ENCODE measurements at regions of chr12 and their contacts with region 1.

Region 1: GRCh38 chr12:6570264-6570887 is 2.3 kb upstream of the NOP2 start:
- DNase-seq: peak; percentile 73
- ATAC-seq: peak; percentile 29
- H3K4me3 Mint-ChIP-seq: no peak overlapping the region
- H3K27ac Mint-ChIP-seq: peak overlapping the region; percentile 10
- H3K4me1 Mint-ChIP-seq: peaks cover 44% of the 10 kb centered on the region
- H3K27me3 Mint-ChIP-seq: no peaks in the 10 kb centered on the region
- CTCF ChIP-seq: peak; percentile 76

Region 2: GRCh38 chr12:6508087-6508486 is 62.3 kb before region 1 on chr12:
- CTCF ChIA-PET with region 1: no interaction called
- POLR2A ChIA-PET with region 1: no interaction called
- intact Hi-C with region 1: no loop called
- DNase-seq: no peak
- ATAC-seq: no peak
- H3K4me3 Mint-ChIP-seq: no peak overlapping the region
- H3K27ac Mint-ChIP-seq: no peak overlapping the region
- H3K4me1 Mint-ChIP-seq: peaks cover 11% of the 10 kb centered on the region
- H3K27me3 Mint-ChIP-seq: no peaks in the 10 kb centered on the region
- CTCF ChIP-seq: no peak

Region 3: GRCh38 chr12:6554168-6555017 is 16.0 kb before region 1 on chr12:
- CTCF ChIA-PET with region 1: interaction called, 12 read pairs
- POLR2A ChIA-PET with region 1: interaction called, 38 read pairs
- intact Hi-C with region 1: no loop called
- DNase-seq: peak; percentile 89
- ATAC-seq: peak; percentile 76
- H3K4me3 Mint-ChIP-seq: peak overlapping the region; percentile 89
- H3K27ac Mint-ChIP-seq: peak overlapping the region; percentile 51
- H3K4me1 Mint-ChIP-seq: peaks cover 50% of the 10 kb centered on the region
- H3K27me3 Mint-ChIP-seq: no peaks in the 10 kb centered on the region
- CTCF ChIP-seq: peak; percentile 62

Region 4: DNA sequence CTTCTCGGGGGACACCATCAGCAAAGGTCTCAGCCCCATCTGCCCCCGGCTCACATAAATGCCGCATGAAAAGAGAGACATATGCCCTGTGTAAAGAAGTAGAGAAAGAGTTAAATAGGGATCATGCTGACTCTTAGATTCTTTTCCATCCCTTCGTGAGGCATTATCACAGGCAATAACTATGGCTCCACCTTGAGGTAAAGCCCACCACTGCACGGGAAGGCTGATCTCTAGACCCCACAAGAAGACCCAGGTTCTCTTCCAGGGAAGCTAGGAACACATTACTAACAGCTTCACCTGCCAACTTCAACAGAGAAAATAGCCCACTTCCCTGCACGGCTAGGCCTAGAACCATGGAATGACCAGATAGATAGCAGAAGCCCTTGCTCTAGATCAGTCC is 11.8 kb after region 1 on chr12:
- CTCF ChIA-PET with region 1: interaction called, 15 read pairs
- POLR2A ChIA-PET with region 1: interaction called, 6 read pairs
- intact Hi-C with region 1: no loop called
- DNase-seq: no peak
- ATAC-seq: no peak
- H3K4me3 Mint-ChIP-seq: no peak overlapping the region
- H3K27ac Mint-ChIP-seq: peak overlapping the region; percentile 23
- H3K4me1 Mint-ChIP-seq: peaks cover 4% of the 10 kb centered on the region
- H3K27me3 Mint-ChIP-seq: no peaks in the 10 kb centered on the region
- CTCF ChIP-seq: no peak

Measured in activated CD8-positive, alpha-beta T cell treated with anti-CD3 and anti-CD28 coated beads for 36 hours (primary cell).